Ascending aorta (tissue), 2 donors: ENCODE measurements at regions of chr10 and their contacts with region 1.

Region 1: GRCh38 chr10:116730464-116731260 is 11.7 kb downstream of the HSPA12A start:
- DNase-seq: no peak
- H3K4me3 ChIP-seq: no peak overlapping the region
- H3K27ac ChIP-seq: no peak overlapping the region
- H3K4me1 ChIP-seq: peaks cover 0 to 13% of the 10 kb centered on the region in 2 donors
- H3K27me3 ChIP-seq: no peaks in the 10 kb centered on the region
- CTCF ChIP-seq: no peak

Region 2: DNA sequence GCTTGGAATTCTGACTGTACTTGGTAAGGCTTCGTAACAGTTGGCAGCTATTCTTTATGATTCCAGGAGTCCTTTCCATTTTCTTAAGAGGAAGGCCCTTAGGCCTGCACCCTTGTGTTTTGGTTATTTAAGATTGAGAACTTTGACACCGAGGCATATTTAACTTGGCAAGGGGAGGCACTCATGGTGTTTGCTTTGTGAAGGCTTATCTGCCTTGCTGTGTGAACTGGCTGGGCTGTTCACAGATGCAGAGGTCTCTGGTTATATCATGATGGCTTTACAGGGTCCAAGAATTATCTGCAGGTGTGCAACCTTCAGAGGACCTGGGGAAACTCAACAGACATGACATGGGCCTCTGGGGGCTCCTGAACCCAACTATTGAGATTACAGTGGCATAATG is 140.7 kb before region 1 on chr10:
- intact Hi-C with region 1: no loop called
- DNase-seq: no peak
- H3K4me3 ChIP-seq: no peak overlapping the region
- H3K27ac ChIP-seq: no peak overlapping the region
- H3K4me1 ChIP-seq: no peaks in the 10 kb centered on the region
- H3K27me3 ChIP-seq: no peaks in the 10 kb centered on the region
- CTCF ChIP-seq: no peak

Region 3: GRCh38 chr10:116716381-116716780 is 14.3 kb before region 1 on chr10:
- intact Hi-C with region 1: loop called (anchors 2 kb)
- DNase-seq: no peak
- H3K4me3 ChIP-seq: no peak overlapping the region
- H3K27ac ChIP-seq: no peak overlapping the region
- H3K4me1 ChIP-seq: no peaks in the 10 kb centered on the region
- H3K27me3 ChIP-seq: no peaks in the 10 kb centered on the region
- CTCF ChIP-seq: no peak